Ascending aorta (tissue), 2 donors: ENCODE measurements at regions of chr6 and their contacts with region 1.

Region 1: GRCh38 chr6:26156076-26156849 is 69.0 kb downstream of the HFE start:
- DNase-seq: peak; percentile 67 to 95
- H3K4me3 ChIP-seq: peak overlapping the region; percentile 86 to 91
- H3K27ac ChIP-seq: peak overlapping the region; percentile 98 to 99
- H3K4me1 ChIP-seq: peaks cover 0 to 14% of the 10 kb centered on the region in 2 donors
- H3K27me3 ChIP-seq: no peaks in the 10 kb centered on the region
- CTCF ChIP-seq: peak in 1 of 3 experiments; percentile 24

Region 2: DNA sequence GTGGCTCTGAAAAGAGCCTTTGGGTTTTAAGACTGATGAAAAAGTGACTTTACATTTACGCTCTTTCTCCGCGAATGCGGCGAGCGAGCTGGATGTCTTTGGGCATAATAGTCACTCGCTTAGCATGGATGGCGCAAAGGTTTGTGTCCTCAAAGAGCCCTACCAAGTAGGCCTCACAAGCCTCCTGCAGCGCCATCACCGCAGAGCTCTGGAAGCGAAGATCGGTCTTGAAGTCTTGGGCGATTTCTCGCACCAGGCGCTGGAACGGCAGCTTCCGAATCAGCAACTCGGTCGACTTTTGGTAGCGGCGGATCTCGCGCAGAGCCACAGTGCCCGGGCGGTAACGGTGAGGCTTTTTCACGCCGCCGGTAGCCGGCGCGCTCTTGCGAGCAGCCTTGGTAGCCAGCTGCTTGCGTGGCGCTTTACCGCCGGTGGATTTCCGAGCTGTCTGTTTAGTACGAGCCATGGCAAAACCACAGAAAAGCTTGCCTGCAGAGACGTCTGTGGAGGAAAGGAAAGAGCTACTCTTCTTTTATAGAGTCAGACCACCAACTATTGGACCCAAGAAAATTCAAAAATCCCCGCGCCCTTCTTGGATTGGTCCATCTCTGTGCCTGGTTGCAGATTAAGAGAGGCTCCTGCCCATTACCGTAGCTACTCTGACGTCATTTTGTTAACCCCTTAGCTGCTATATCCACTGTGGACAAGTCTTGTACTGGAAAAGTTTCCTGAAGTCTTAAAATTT is 124.5 kb before region 1 on chr6:
- intact Hi-C with region 1: loop called (anchors 2 kb)
- DNase-seq: peak; percentile 53 to 94
- H3K4me3 ChIP-seq: peak overlapping the region; percentile 56 to 79
- H3K27ac ChIP-seq: peak overlapping the region; percentile 92 to 96
- H3K4me1 ChIP-seq: peaks cover 5 to 20% of the 10 kb centered on the region in 2 donors
- H3K27me3 ChIP-seq: no peaks in the 10 kb centered on the region
- CTCF ChIP-seq: peak in 1 of 3 experiments; percentile 20

Region 3: GRCh38 chr6:26054857-26055669 is 101.2 kb before region 1 on chr6:
- intact Hi-C with region 1: loop called (anchors 5 kb)
- DNase-seq: peak; percentile 68 to 96
- H3K4me3 ChIP-seq: peak overlapping the region; percentile 74 to 80
- H3K27ac ChIP-seq: peak overlapping the region; percentile 92 to 94
- H3K4me1 ChIP-seq: peaks cover 0 to 7% of the 10 kb centered on the region in 2 donors
- H3K27me3 ChIP-seq: no peaks in the 10 kb centered on the region
- CTCF ChIP-seq: peak in 2 of 3 experiments; percentile 23 to 36

Region 4: GRCh38 chr6:26065952-26066380 is 90.3 kb before region 1 on chr6:
- intact Hi-C with region 1: no loop called
- DNase-seq: peak in 1 of 2 donors; percentile 78
- H3K4me3 ChIP-seq: peak overlapping the region in 1 of 2 donors; percentile 24
- H3K27ac ChIP-seq: no peak overlapping the region
- H3K4me1 ChIP-seq: no peaks in the 10 kb centered on the region
- H3K27me3 ChIP-seq: no peaks in the 10 kb centered on the region
- CTCF ChIP-seq: peak; percentile 83 to 89 (median 87)

Region 5: DNA sequence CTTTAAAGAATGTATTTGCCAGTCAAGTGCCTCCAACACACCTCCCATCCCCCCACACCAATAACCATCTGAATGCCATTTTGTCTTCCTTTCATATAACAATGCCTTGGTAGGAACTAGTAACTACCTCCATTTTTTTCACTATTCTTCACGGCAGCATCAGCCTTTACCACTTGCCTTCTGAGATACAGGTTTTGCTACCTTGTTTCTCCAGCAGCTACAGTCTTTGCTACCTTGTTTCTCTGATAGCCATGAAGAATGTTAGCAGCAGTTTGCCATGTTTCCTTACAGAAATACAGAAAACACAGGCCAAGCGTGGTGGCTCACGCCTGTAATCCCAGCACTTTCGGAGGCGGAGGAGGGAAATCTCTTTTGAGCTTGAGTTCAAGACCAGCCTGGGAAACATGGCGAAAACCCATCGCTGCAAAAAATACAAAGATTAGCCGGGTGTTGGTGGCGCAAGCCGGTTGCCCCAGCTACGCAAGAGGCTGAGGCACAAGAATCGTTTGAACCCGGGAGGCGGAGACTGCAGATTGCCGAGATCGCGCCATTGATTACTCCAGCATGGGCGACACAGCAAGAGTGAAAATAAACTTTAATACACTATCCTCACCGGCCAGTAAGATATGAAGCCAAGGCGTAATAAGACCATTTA is 31.8 kb after region 1 on chr6:
- intact Hi-C with region 1: loop called (anchors 2 kb)
- DNase-seq: peak in 1 of 2 donors; percentile 75
- H3K4me3 ChIP-seq: peak overlapping the region; percentile 57 to 79
- H3K27ac ChIP-seq: peak overlapping the region; percentile 85 to 89
- H3K4me1 ChIP-seq: peaks cover 4 to 13% of the 10 kb centered on the region in 2 donors
- H3K27me3 ChIP-seq: no peaks in the 10 kb centered on the region
- CTCF ChIP-seq: no peak

Region 6: DNA sequence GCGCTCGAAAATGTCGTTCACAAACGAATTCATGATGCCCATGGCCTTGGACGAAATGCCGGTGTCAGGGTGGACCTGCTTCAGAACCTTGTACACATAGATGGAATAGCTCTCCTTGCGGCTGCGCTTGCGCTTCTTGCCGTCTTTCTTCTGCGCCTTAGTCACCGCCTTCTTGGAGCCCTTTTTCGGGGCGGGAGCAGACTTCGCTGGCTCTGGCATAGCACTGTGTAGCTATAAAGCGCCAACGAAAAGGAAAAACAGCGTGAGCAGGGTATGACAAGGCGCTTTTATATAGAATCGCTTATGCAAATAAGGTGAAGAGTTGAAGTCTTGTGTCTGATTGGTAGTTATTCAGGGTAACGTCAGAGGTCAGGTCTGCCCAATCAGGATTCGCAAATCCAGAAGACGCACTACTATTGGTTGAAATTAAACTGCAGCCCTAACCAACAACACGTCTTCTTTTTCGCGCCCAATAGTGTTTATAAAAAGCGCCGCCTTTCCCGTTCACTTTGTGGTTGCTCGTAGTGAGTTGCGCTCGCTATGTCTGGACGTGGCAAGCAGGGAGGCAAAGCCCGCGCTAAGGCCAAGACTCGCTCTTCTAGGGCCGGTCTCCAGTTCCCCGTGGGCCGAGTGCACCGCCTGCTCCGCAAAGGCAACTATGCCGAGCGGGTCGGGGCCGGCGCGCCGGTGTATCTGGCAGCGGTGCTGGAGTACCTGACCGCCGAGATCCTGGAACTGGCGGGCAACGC is 976.4 kb after region 1 on chr6:
- intact Hi-C with region 1: loop called (anchors 5 kb)
- DNase-seq: peak; percentile 82 to 97
- H3K4me3 ChIP-seq: peak overlapping the region; percentile 69 to 75
- H3K27ac ChIP-seq: peak overlapping the region; percentile 88 to 89
- H3K4me1 ChIP-seq: peaks cover 4 to 10% of the 10 kb centered on the region in 2 donors
- H3K27me3 ChIP-seq: no peaks in the 10 kb centered on the region
- CTCF ChIP-seq: no peak